ENCODE measurements at regions of chr7 and their contacts with region 1.

Region 1: GRCh38 chr7:152145853-152146466 is 120.5 kb downstream of the GALNT11 start:
- DNase-seq: peak; percentile 19 to 52 (median 52)
- H3K4me3 ChIP-seq: no peak overlapping the region
- H3K27ac ChIP-seq: no peak overlapping the region
- H3K4me1 ChIP-seq: peaks cover 0 to 21% (median 10%) of the 10 kb centered on the region in 4 experiments
- H3K27me3 ChIP-seq: no peaks in the 10 kb centered on the region

Region 2: GRCh38 chr7:152025077-152025936 is 120.7 kb before region 1 on chr7 and contains the start of gene GALNT11:
- CTCF ChIA-PET with region 1: no interaction called
- POLR2A ChIA-PET with region 1: no interaction called
- DNase-seq: peak; percentile 88 to 94 (median 93)
- H3K4me3 ChIP-seq: peak within 1 kb of the TSS; percentile 71 to 87 (median 78)
- H3K27ac ChIP-seq: peak within 1 kb of the TSS in 1 of 2 experiments; percentile 77
- H3K4me1 ChIP-seq: peaks cover 4 to 12% (median 9%) of the 10 kb centered on the region in 4 experiments
- H3K27me3 ChIP-seq: no peaks in the 10 kb centered on the region

Region 3: GRCh38 chr7:152115021-152115733 is 30.8 kb before region 1 on chr7:
- CTCF ChIA-PET with region 1: no interaction called
- POLR2A ChIA-PET with region 1: no interaction called
- DNase-seq: no peak
- H3K4me3 ChIP-seq: no peak overlapping the region
- H3K27ac ChIP-seq: no peak overlapping the region
- H3K4me1 ChIP-seq: no peaks in the 10 kb centered on the region
- H3K27me3 ChIP-seq: no peaks in the 10 kb centered on the region

Region 4: DNA sequence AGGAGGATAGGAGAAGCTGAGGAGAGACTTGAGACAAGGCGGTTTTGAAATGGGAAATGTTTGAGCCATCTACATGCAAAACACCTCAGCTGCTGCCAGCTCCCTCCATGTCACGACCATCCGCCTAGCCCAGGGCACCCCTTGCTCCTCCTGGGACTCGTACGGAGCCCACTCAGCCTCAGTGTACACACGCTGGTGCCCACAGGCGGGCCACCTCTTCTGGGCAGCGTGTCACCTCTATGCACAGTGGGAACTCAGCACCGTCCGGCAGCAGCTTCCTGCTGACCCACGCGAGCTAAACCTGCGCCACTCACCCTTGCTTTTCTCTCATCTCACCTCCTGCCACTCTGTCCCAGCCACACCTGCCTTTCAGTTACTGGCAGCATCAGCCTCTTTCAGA is 12.2 kb before region 1 on chr7:
- CTCF ChIA-PET with region 1: interaction called, 12 read pairs
- POLR2A ChIA-PET with region 1: no interaction called
- DNase-seq: no peak
- H3K4me3 ChIP-seq: no peak overlapping the region
- H3K27ac ChIP-seq: no peak overlapping the region
- H3K4me1 ChIP-seq: no peaks in the 10 kb centered on the region
- H3K27me3 ChIP-seq: no peaks in the 10 kb centered on the region

Region 5: DNA sequence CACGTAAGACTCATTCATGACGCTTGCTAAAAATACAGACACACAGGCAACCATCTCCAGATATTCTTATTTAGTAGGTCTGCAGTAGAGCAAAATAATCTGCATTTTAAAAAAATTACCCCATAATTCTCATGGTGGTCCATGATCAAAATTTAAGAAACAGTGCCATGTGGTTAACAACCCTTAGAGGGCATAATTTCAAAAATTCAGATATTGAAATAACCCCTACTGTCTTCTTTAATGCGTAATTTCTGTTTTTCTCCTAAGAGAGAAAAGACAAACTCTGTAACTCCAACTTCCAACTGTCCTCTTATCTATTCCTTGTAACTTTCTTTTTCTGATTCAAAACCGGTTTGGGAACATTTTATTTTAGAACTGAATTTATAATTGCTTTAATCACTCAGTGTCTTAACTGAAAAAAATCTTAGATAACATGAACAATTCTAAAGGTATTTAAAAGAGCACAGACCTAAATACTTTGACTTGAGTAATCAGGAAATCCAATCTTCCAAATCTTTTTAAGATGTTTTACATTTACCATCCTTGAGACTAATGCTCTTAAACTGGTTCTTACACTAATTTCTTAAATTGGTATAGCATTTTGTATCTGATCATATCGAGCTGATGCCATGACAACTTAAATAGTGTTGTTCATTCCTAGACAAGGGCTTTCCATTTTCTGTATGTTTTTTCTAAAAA is 27.6 kb after region 1 on chr7:
- CTCF ChIA-PET with region 1: no interaction called
- POLR2A ChIA-PET with region 1: no interaction called
- DNase-seq: peak in 2 of 3 donors; percentile 7 to 12
- H3K4me3 ChIP-seq: no peak overlapping the region
- H3K27ac ChIP-seq: no peak overlapping the region
- H3K4me1 ChIP-seq: peaks cover 0 to 3% (median 0%) of the 10 kb centered on the region in 4 experiments
- H3K27me3 ChIP-seq: no peaks in the 10 kb centered on the region

Measured in common myeloid progenitor, CD34-positive (primary cell).